ENCODE measurements at regions of chr9 and their contacts with region 1.

Region 1: DNA sequence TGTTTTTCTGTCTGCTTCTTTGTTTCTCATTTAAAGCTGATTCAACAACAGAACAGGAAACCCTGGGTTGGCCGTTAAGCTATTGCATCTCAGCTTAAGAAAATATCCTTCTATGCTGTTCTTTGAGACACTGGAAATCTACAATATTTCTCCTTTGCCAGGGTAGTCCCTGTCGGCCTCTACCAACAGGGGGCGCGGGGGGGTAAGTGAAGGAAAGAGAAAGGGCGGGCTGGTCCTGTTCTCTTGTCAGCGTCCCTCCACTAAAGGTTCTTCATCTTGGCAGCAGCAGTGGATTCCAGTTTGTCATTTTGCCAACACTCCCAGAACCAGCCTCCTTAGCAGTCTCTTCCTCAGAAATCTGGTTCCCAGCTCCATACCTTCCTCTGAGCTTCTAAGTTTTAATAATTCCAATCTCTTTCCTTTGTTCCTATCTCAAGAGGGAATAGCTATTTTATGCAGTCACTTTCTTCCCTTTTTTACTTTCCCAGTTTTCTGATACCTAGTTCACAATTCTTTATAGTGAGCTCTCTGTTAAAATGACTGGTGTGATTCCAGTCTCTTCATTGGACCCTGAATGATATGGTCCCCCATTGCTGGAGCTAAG is 222.3 kb downstream of the GLIS3 start:
- H3K4me3 ChIP-seq: no peak overlapping the region
- H3K27ac ChIP-seq: no peak overlapping the region
- H3K4me1 ChIP-seq: no peaks in the 10 kb centered on the region
- CTCF ChIP-seq: 0 out of 2 replicates have a peak, but pooled peaks have one; percentile 38

Region 2: DNA sequence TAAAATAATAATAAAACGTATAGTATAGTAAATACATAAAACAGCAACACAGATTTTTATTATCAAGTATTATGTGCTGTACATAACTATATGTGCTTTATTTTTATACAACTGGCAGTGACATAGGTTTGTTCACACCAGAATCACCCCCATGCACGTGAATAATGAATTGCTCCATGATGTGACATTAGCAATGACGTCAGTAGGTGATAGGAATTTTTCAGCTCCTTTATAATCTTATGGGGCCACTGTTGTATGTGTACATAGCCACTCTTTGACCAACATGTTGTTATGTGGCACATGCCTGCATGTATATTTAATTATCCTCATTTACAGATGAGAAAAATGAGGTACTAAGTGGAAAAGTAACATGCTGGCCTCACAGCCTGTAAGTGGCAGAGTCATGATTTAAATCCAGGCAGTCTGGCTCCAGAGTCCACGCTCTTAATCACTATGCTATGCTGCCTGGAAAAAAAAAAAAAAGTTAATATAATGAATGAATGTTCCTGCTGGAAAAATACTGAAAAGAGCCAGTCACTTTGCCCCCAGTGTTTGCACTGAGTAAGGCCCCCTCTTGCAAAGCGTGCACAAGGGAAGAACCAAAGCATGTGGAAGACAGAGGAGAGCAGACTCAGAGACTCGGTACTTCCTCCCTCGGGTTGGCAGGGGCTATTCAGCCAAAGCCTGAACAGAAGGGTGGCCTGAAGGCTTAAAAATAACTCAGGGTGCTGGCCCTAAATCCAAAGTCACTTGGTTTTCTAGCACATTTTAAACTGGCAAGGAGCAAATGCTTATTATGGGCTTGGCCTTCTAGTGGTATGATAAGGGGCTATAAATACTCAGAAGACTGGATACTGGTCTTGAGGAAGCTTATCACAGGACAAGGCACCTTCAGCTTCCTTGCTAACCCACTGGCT is 15.4 kb after region 1 on chr9:
- CTCF ChIA-PET with region 1: interaction called, 10 read pairs
- POLR2A ChIA-PET with region 1: no interaction called
- H3K4me3 ChIP-seq: no peak overlapping the region
- H3K27ac ChIP-seq: no peak overlapping the region
- H3K4me1 ChIP-seq: no peaks in the 10 kb centered on the region
- CTCF ChIP-seq: no peak

Region 3: GRCh38 chr9:4152201-4152600 is 74.6 kb after region 1 on chr9:
- CTCF ChIA-PET with region 1: no interaction called
- POLR2A ChIA-PET with region 1: no interaction called
- H3K4me3 ChIP-seq: no peak overlapping the region
- H3K27ac ChIP-seq: no peak overlapping the region
- H3K4me1 ChIP-seq: 0 out of 2 replicates have a peak, but pooled peaks cover 5% of the 10 kb centered on the region
- CTCF ChIP-seq: no peak

Region 4: GRCh38 chr9:4228606-4229005 is 151.0 kb after region 1 on chr9:
- CTCF ChIA-PET with region 1: interaction called, 11 read pairs
- POLR2A ChIA-PET with region 1: no interaction called
- H3K4me3 ChIP-seq: no peak overlapping the region
- H3K27ac ChIP-seq: no peak overlapping the region
- H3K4me1 ChIP-seq: no peaks in the 10 kb centered on the region
- CTCF ChIP-seq: no peak